ENCODE measurements at regions of chr7 and their contacts with region 1.

Region 1: GRCh38 chr7:64625114-64626082 is 40.5 kb upstream of the ZNF107 start:
- DNase-seq: no peak
- H3K4me3 ChIP-seq: no peak overlapping the region
- H3K27ac ChIP-seq: no peak overlapping the region
- H3K4me1 ChIP-seq: no peaks in the 10 kb centered on the region
- H3K27me3 ChIP-seq: no peaks in the 10 kb centered on the region
- CTCF ChIP-seq: peak in 10 of 11 experiments; percentile 31 to 78 (median 66)
- POLR2A ChIP-seq: no peak

Region 2: DNA sequence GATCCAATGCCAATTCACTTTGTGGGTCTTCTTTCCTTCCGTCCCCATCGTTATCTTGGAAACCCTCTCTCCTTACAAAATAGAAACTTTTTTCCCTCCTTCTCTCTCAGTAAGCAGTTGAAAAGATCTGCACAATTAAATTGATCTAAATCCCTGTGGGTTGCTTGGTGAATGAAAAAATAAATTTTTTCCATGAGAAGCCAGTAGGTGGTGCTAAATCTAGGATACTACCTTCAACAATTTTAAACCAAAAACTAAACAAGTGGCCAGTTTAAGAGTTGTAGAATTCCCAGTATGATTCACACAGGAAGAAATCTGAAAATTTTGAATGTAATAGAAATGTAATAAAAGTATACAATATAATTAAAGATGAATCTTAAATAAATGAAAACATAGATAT is 1617.0 kb before region 1 on chr7:
- intact Hi-C with region 1: loop called (anchors 10 kb)
- DNase-seq: no peak
- H3K4me3 ChIP-seq: no peak overlapping the region
- H3K27ac ChIP-seq: no peak overlapping the region
- H3K4me1 ChIP-seq: no peaks in the 10 kb centered on the region
- H3K27me3 ChIP-seq: no peaks in the 10 kb centered on the region
- CTCF ChIP-seq: no peak
- POLR2A ChIP-seq: no peak

Region 3: DNA sequence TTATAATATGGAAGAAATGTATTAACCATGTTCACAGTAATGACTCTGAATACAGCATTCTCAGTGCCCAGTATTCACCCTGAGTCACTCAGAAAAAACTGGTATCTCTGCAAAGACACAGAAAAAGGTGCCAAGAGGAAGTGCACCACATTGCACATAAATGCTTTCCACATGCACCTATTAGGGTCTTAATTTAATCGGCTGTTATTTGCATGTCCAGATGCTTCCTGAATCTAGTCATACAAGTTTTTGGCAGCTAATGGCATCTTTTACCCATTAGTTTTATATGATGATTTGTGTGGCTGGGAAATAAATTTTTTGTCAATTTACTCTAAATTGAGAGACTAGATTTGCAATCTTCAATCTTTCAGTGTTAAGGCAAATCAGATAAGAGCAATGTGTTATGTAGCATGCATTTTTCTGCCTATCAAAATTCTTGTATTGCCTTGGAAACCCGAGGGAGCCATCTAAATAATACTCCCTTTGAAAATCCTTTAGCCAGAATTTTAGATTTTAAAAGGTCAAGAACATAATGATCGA is 120.7 kb before region 1 on chr7:
- intact Hi-C with region 1: no loop called
- DNase-seq: no peak
- H3K4me3 ChIP-seq: no peak overlapping the region
- H3K27ac ChIP-seq: no peak overlapping the region
- H3K4me1 ChIP-seq: no peaks in the 10 kb centered on the region
- H3K27me3 ChIP-seq: no peaks in the 10 kb centered on the region
- CTCF ChIP-seq: no peak
- POLR2A ChIP-seq: no peak

Measured in spleen (tissue), 13 donors.